AG04450 (cell line): ENCODE measurements at regions of chr2 and their contacts with region 1.

Region 1: GRCh38 chr2:177164584-177165052 is 48.0 kb upstream of the HNRNPA3 start:
- DNase-seq: no peak
- H3K4me3 ChIP-seq: peak overlapping the region; percentile 42
- H3K27ac ChIP-seq: no peak overlapping the region
- H3K27me3 ChIP-seq: no peaks in the 10 kb centered on the region
- CTCF ChIP-seq: peak; percentile 100

Region 2: GRCh38 chr2:176317199-176317598 is 847.4 kb before region 1 on chr2:
- CTCF ChIA-PET with region 1: interaction called, 10 read pairs
- POLR2A ChIA-PET with region 1: no interaction called
- DNase-seq: no peak
- H3K4me3 ChIP-seq: no peak overlapping the region
- H3K27ac ChIP-seq: no peak overlapping the region
- H3K27me3 ChIP-seq: no peaks in the 10 kb centered on the region
- CTCF ChIP-seq: no peak

Region 3: GRCh38 chr2:176935543-176936102 is 229.0 kb before region 1 on chr2:
- CTCF ChIA-PET with region 1: no interaction called
- POLR2A ChIA-PET with region 1: no interaction called
- DNase-seq: no peak
- H3K4me3 ChIP-seq: no peak overlapping the region
- H3K27ac ChIP-seq: no peak overlapping the region
- H3K27me3 ChIP-seq: no peaks in the 10 kb centered on the region
- CTCF ChIP-seq: no peak

Region 4: DNA sequence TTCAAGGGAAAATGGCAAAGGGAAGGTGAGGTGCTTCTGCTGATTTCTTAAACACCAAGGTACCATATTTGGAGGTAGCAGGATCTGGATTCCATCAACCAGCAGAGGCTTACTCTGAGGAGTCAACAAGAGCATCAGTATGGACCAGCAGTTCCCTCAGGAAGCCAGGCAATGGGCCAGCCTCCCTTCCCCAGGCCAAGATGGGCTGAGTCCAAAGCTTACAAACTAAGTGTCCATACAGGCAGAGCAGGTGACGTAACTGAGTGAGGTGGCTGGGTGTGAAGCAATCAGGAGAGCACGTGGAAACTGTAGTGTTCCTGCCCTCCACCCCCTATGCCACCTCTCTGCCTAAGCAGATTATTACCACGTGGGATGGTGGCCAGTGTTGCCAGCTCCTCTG is 86.2 kb before region 1 on chr2:
- CTCF ChIA-PET with region 1: no interaction called
- POLR2A ChIA-PET with region 1: no interaction called
- DNase-seq: no peak
- H3K4me3 ChIP-seq: no peak overlapping the region
- H3K27ac ChIP-seq: no peak overlapping the region
- H3K27me3 ChIP-seq: no peaks in the 10 kb centered on the region
- CTCF ChIP-seq: no peak

Region 5: GRCh38 chr2:177129610-177130009 is 35.0 kb before region 1 on chr2:
- CTCF ChIA-PET with region 1: no interaction called
- POLR2A ChIA-PET with region 1: no interaction called
- DNase-seq: no peak
- H3K4me3 ChIP-seq: no peak overlapping the region
- H3K27ac ChIP-seq: no peak overlapping the region
- H3K27me3 ChIP-seq: no peaks in the 10 kb centered on the region
- CTCF ChIP-seq: no peak

Region 6: GRCh38 chr2:177201919-177202346 is 37.3 kb after region 1 on chr2:
- CTCF ChIA-PET with region 1: interaction called, 16 read pairs
- POLR2A ChIA-PET with region 1: no interaction called
- DNase-seq: no peak
- H3K4me3 ChIP-seq: no peak overlapping the region
- H3K27ac ChIP-seq: no peak overlapping the region
- H3K27me3 ChIP-seq: no peaks in the 10 kb centered on the region
- CTCF ChIP-seq: no peak

Region 7: DNA sequence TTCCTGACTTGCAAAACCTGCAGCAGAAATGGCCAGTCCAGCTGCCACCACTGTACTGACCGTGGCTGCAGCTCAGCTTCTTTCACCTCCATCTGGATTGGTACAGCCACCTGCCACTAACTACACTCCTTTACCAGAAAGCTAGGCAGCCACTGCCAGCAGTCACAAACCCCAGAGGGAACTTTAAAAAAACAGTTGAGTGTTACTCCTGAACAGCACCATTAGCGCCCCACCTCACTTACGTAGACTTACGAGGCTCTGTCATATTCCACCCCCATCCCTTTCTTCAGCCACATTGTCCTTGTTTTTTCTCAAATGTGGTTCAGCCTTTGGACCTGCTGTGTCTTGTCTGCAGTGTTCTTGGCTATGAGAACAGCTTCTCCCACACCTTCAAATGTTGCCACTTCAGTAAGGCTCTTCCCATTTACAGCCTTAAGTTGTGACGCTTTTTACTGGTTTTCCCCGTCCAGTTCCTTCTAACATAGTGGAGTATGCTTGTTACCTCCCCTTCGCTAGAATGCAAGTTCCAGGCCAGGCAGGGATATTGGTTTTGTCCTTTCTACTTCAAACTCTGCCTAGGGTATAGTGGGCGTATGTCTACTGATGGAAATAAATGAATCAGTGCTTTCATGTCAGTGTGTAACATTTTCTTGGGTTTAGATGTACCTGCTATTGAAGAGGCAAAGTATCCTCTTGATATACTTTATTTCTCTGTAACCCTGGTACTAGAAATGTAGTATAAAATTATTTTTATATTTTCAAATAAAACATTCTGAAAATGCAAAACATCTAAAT is 65.0 kb after region 1 on chr2:
- CTCF ChIA-PET with region 1: interaction called, 69 read pairs
- POLR2A ChIA-PET with region 1: interaction called, 6 read pairs
- DNase-seq: no peak
- H3K4me3 ChIP-seq: no peak overlapping the region
- H3K27ac ChIP-seq: no peak overlapping the region
- H3K27me3 ChIP-seq: no peaks in the 10 kb centered on the region
- CTCF ChIP-seq: no peak

Region 8: DNA sequence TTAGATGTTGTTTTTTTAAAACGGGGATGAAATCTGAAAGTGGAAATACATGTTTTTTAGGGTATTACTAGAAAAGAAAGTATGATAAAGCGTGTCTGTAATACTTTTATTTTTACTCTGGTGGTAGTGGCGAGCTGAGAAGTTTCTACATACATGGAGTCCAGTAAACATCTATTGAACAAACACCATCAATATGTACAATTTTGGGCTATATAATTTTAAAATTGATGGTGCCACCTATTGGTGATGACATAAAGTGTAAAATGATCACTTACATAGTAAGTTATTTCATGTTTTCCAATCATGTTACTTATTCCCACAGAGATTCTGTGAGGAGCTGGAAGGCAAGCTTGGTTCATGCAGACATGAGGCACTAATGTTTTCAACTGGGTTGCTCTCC is 131.4 kb after region 1 on chr2:
- CTCF ChIA-PET with region 1: interaction called, 16 read pairs
- POLR2A ChIA-PET with region 1: no interaction called
- DNase-seq: no peak
- H3K4me3 ChIP-seq: no peak overlapping the region
- H3K27ac ChIP-seq: no peak overlapping the region
- H3K27me3 ChIP-seq: no peaks in the 10 kb centered on the region
- CTCF ChIP-seq: peak; percentile 36

Region 9: DNA sequence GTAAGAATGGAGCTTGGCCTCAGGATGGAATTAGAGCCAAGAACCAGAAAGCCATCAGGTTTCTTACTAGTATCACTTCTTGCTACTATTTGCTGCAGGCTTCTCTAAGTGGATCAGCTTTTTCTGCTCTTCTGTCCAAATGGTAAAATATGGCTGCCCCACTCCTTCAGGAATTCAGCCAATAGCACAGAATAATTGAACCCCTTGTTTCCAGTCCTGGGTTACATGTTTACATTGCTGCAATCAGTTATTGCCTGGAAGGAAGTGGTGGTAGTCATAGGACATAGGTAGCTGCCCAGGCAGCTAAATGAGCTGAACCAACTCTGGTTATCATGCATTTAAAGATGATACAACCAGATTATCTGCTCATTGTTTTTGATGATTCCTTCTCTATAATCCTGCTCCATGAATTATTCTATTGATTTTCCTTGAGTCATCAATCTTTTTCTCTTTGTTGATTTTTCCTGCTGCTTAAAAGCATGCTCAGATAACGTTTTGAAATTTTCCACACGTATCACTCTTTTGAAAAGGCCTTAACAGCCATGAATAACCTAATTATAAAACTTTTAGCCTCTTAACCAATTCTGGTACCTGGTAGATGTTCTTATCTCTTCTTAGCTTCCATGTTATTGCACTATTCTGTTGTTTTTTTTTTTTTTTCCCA is 240.5 kb after region 1 on chr2:
- CTCF ChIA-PET with region 1: interaction called, 13 read pairs
- POLR2A ChIA-PET with region 1: no interaction called
- DNase-seq: no peak
- H3K4me3 ChIP-seq: no peak overlapping the region
- H3K27ac ChIP-seq: no peak overlapping the region
- H3K27me3 ChIP-seq: no peaks in the 10 kb centered on the region
- CTCF ChIP-seq: no peak

Region 10: GRCh38 chr2:177604271-177605065 is 439.9 kb after region 1 on chr2:
- CTCF ChIA-PET with region 1: interaction called, 40 read pairs
- POLR2A ChIA-PET with region 1: no interaction called
- DNase-seq: peak; percentile 23
- H3K4me3 ChIP-seq: peak overlapping the region; percentile 8; the same call in 1 of the 2 replicates
- H3K27ac ChIP-seq: no peak overlapping the region
- H3K27me3 ChIP-seq: no peaks in the 10 kb centered on the region
- CTCF ChIP-seq: peak; percentile 85